OCI-LY7 (cell line): ENCODE measurements at regions of chr12 and their contacts with region 1.

Region 1: GRCh38 chr12:6723607-6724396 is at the start of gene COPS7A:
- DNase-seq: peak; percentile 100
- H3K4me3 ChIP-seq: peak within 1 kb of the TSS; percentile 76
- H3K27ac ChIP-seq: peak within 1 kb of the TSS; percentile 77
- H3K4me1 ChIP-seq: peaks cover 52% of the 10 kb centered on the region
- CTCF ChIP-seq: peak; percentile 25; the same call in 1 of the 2 replicates
- total RNA-seq, gene COPS7A: 64.8 and 71.2 TPM in 2 replicates

Region 2: GRCh38 chr12:6559500-6559899 is 164.3 kb before region 1 on chr12:
- CTCF ChIA-PET with region 1: no interaction called
- POLR2A ChIA-PET with region 1: no interaction called
- intact Hi-C with region 1: no loop called
- DNase-seq: no peak
- H3K4me3 ChIP-seq: no peak overlapping the region
- H3K27ac ChIP-seq: no peak overlapping the region
- H3K4me1 ChIP-seq: peaks cover 28% of the 10 kb centered on the region
- CTCF ChIP-seq: no peak

Region 3: DNA sequence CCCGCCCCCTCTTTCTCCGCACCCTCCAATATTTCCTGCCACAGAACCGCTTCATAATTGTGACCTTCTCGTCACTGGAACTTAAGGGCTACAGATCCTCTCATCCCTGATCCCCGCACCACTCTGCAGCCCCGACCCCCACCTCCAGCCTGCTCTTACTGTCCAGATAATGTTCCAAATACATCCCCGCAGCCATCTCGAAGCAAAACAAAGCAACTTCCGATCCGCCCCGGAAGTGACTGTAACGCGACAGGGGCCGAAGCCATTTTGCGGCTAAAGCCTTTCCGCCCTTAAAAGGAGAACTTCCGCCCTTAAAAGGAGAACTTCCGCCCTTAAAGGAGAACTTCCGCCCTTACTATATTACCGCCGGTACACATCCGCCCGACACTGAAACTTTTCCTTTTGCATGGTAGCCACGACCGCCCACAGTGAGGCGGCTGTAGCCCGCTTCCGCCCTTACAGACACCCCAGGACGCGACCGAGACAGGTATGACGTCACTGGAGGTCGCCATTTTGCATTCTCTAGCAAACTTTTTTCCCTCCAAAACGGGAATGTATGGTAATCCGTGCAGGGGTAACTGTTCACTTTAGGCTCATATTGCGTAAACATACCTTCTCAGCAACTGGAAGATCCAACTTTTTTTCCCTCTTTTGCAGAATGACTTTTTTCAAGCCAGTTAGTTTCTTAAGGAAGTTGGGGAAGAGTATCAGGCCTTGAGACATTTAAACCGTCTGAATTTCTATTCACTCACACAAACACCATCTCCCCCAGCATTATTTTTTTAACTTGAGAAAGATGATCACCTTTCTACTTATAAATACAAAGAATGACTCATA is 60.7 kb before region 1 on chr12 and contains the start of gene ING4:
- CTCF ChIA-PET with region 1: no interaction called
- POLR2A ChIA-PET with region 1: interaction called, 7 read pairs
- intact Hi-C with region 1: loop called (anchors 1 kb)
- DNase-seq: peak; percentile 100
- H3K4me3 ChIP-seq: peak within 1 kb of the TSS; percentile 79
- H3K27ac ChIP-seq: peak within 1 kb of the TSS; percentile 67
- H3K4me1 ChIP-seq: peaks cover 19% of the 10 kb centered on the region
- CTCF ChIP-seq: no peak
- total RNA-seq, gene ING4: 27.1 and 38.1 TPM in 2 replicates

Region 4: GRCh38 chr12:6708960-6709394 is 14.8 kb before region 1 on chr12:
- CTCF ChIA-PET with region 1: interaction called, 3 read pairs
- POLR2A ChIA-PET with region 1: interaction called, 10 read pairs
- intact Hi-C with region 1: no loop called
- DNase-seq: no peak
- H3K4me3 ChIP-seq: no peak overlapping the region
- H3K27ac ChIP-seq: no peak overlapping the region
- H3K4me1 ChIP-seq: peaks cover 6% of the 10 kb centered on the region
- CTCF ChIP-seq: no peak

Region 5: GRCh38 chr12:6752921-6753771 is 29.3 kb after region 1 on chr12 and contains the start of gene MLF2:
- CTCF ChIA-PET with region 1: interaction called, 7 read pairs
- POLR2A ChIA-PET with region 1: interaction called, 14 read pairs
- intact Hi-C with region 1: loop called (anchors 1 kb)
- DNase-seq: peak; percentile 97
- H3K4me3 ChIP-seq: peak within 1 kb of the TSS; percentile 89
- H3K27ac ChIP-seq: peak within 1 kb of the TSS; percentile 73
- H3K4me1 ChIP-seq: peaks cover 17% of the 10 kb centered on the region
- CTCF ChIP-seq: no peak
- total RNA-seq, gene MLF2: 87.3 and 96.2 TPM in 2 replicates